Activated T-helper 1 cell treated with anti-CD3 and anti-CD28 coated beads, Interleukin-12 subunit alpha, Interleukin-12 subunit beta, Interleukin-2, Interleukin-4 antibody, amounts not matched to agents 30 ng/mL and 10 ng/mL and 1 ng/mL, durations not matched to agents 14 hours and 24 hours and 36 hours (primary cell): ENCODE measurements at regions of chr2 and their contacts with region 1.

Region 1: DNA sequence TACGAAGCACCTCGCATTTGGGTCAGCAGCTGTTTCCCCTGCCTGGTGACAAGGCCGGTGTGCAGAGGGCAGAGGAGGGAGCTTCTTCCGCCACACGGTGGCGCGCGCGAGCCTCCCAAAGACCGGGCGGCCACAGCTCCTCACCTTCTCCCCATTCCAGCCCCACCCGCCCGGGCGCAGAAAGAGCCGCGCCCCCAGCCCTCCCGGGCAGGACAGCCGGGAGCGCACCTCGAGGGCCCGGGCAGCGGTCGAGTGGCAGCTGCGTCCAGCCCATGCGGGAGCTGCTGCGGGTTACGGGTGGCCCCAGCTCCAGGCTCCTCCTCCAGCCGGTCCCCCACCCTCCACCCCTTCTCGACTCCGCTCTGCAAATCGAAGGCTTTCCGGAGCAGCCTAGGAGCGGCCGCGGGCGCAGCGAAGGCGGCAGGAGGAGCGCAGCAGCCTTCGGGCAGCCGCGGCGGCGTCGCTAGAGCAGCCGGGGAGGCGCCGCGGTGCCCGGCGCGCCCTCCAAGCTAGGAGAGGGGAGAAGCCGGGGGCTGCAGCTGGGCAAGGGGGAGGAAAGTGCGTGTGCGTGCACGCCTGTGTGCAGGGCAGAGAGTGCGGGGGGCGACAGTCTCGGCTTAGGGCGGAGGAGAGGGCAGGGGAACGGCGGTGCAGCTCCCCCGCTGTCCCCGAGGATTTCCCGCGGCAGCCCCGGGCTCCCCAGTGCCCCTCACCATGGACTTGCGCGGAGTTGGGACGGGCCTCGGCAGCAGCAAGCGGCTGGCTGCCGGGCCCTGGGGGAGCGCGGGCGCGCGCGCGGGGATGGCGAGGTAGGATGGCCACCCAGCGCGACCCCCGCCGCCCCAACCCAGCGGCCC is at the start of gene CCDC85A:
- DNase-seq: peak; percentile 55
- H3K4me3 Mint-ChIP-seq: no peak within 1 kb of the TSS
- H3K27ac Mint-ChIP-seq: no peak within 1 kb of the TSS
- H3K4me1 Mint-ChIP-seq: peaks cover 4% of the 10 kb centered on the region
- H3K27me3 Mint-ChIP-seq: peaks cover 43% of the 10 kb centered on the region
- total RNA-seq, gene CCDC85A: not detected in 2 replicates

Region 2: GRCh38 chr2:56167616-56168562 is 16.0 kb before region 1 on chr2:
- intact Hi-C with region 1: no loop called
- DNase-seq: no peak
- H3K4me3 Mint-ChIP-seq: no peak overlapping the region
- H3K27ac Mint-ChIP-seq: no peak overlapping the region
- H3K4me1 Mint-ChIP-seq: no peaks in the 10 kb centered on the region
- H3K27me3 Mint-ChIP-seq: no peaks in the 10 kb centered on the region

Region 3: DNA sequence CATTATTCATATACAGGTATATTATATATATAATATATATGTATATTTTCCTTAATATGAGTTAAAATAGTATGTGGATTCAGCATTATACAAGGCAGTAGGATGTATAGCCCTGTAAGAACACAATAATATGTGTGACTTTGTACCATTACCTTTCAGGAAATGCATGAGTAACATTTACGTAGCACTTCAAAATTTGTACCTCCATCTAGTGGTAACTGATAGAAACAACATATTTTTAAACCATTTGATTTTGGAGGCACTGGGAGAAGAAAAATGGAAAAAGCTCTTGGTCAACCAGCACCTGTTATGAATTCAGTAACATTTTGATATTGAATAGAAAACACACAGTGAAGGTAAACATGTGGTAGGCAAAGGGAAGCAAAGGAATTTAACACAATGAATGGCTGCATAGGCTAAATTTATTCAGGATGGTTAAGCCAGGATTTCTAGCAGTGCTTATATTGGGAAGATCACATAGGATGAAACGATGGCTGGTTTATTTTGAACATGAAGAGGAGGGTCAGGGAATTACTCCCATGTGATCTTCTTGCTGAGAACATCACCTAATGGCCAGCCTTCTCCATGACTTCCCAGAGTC is 565.4 kb after region 1 on chr2:
- intact Hi-C with region 1: loop called (anchors 5 kb)
- DNase-seq: no peak
- H3K4me3 Mint-ChIP-seq: no peak overlapping the region
- H3K27ac Mint-ChIP-seq: no peak overlapping the region
- H3K4me1 Mint-ChIP-seq: no peaks in the 10 kb centered on the region
- H3K27me3 Mint-ChIP-seq: no peaks in the 10 kb centered on the region

Region 4: GRCh38 chr2:57497489-57498096 is 1313.7 kb after region 1 on chr2:
- intact Hi-C with region 1: loop called (anchors 1 kb)
- DNase-seq: no peak
- H3K4me3 Mint-ChIP-seq: no peak overlapping the region
- H3K27ac Mint-ChIP-seq: no peak overlapping the region
- H3K4me1 Mint-ChIP-seq: no peaks in the 10 kb centered on the region
- H3K27me3 Mint-ChIP-seq: no peaks in the 10 kb centered on the region

Region 5: GRCh38 chr2:57516698-57517340 is 1332.9 kb after region 1 on chr2:
- intact Hi-C with region 1: loop called (anchors 1 kb)
- DNase-seq: no peak
- H3K4me3 Mint-ChIP-seq: no peak overlapping the region
- H3K27ac Mint-ChIP-seq: no peak overlapping the region
- H3K4me1 Mint-ChIP-seq: no peaks in the 10 kb centered on the region
- H3K27me3 Mint-ChIP-seq: no peaks in the 10 kb centered on the region